Activated CD4-positive, alpha-beta T cell treated with anti-CD3 and anti-CD28 coated beads, Interleukin-2, amount 10 ng/mL, durations not matched to agents 24 days and 14 days (primary cell): ENCODE measurements at regions of chr12 and their contacts with region 1.

Region 1: GRCh38 chr12:10212201-10213131 is at the start of gene GABARAPL1:
- DNase-seq: peak; percentile 95
- H3K4me3 Mint-ChIP-seq: peak within 1 kb of the TSS; percentile 94
- H3K27ac Mint-ChIP-seq: peak within 1 kb of the TSS; percentile 93
- H3K4me1 Mint-ChIP-seq: peaks cover 26% of the 10 kb centered on the region
- H3K27me3 Mint-ChIP-seq: peaks cover 30% of the 10 kb centered on the region
- total RNA-seq, gene GABARAPL1: 1.5 and 2.6 TPM in 2 replicates

Region 2: DNA sequence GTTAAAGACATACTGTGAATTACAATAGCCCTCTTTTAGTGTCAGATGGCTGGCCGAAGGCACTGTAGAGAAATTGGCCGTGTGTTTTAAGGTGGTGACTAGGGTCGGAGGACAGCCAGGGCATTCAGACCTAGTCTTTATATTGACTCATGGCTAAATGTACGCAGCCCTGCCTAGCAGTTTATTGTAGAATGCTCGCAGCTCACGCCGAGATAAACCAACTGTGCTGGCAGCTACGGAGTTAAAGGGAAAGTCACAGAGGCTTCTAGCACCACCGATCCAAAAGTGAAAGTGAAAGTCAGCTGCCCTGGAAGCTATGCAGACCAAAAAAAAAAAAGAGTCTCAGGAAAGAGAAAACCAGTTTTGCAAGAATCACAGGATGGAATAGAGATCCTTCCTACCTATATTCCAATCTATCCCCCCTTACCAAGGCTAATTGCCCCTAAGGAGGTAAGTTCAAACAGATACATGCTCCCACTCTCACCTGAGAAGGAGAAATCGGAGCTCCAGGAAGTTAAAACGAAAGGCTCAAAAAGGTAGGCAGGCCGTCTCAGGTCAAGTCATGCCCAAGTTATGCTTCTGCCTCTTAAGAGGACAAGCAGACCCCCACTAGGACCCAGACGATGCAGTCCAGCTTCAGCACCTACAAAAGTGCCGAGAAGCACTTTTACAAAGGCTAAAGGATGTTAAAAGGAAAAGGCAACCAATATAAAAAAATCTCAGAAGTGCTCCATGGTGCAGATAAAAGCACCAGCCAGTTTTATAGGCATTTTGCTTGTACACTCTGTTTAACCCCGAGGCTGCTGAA is 152.6 kb after region 1 on chr12:
- intact Hi-C with region 1: loop called (anchors 10 kb)
- DNase-seq: peak; percentile 90
- H3K4me3 Mint-ChIP-seq: no peak overlapping the region
- H3K27ac Mint-ChIP-seq: no peak overlapping the region
- H3K4me1 Mint-ChIP-seq: no peaks in the 10 kb centered on the region
- H3K27me3 Mint-ChIP-seq: peaks cover 36% of the 10 kb centered on the region

Region 3: GRCh38 chr12:10613349-10614055 is 401.0 kb after region 1 on chr12 and contains the start of gene MAGOHB:
- intact Hi-C with region 1: loop called (anchors 2 kb)
- DNase-seq: peak; percentile 100
- H3K4me3 Mint-ChIP-seq: peak within 1 kb of the TSS; percentile 100
- H3K27ac Mint-ChIP-seq: peak within 1 kb of the TSS; percentile 100
- H3K4me1 Mint-ChIP-seq: peaks cover 27% of the 10 kb centered on the region
- H3K27me3 Mint-ChIP-seq: peaks cover 19% of the 10 kb centered on the region
- total RNA-seq, gene MAGOHB: 88.6 and 91.1 TPM in 2 replicates

Region 4: GRCh38 chr12:10721651-10722501 is 509.4 kb after region 1 on chr12:
- intact Hi-C with region 1: loop called (anchors 2 kb)
- DNase-seq: peak; percentile 89
- H3K4me3 Mint-ChIP-seq: peak overlapping the region; percentile 96
- H3K27ac Mint-ChIP-seq: peak overlapping the region; percentile 95
- H3K4me1 Mint-ChIP-seq: peaks cover 34% of the 10 kb centered on the region
- H3K27me3 Mint-ChIP-seq: peaks cover 31% of the 10 kb centered on the region

Region 5: DNA sequence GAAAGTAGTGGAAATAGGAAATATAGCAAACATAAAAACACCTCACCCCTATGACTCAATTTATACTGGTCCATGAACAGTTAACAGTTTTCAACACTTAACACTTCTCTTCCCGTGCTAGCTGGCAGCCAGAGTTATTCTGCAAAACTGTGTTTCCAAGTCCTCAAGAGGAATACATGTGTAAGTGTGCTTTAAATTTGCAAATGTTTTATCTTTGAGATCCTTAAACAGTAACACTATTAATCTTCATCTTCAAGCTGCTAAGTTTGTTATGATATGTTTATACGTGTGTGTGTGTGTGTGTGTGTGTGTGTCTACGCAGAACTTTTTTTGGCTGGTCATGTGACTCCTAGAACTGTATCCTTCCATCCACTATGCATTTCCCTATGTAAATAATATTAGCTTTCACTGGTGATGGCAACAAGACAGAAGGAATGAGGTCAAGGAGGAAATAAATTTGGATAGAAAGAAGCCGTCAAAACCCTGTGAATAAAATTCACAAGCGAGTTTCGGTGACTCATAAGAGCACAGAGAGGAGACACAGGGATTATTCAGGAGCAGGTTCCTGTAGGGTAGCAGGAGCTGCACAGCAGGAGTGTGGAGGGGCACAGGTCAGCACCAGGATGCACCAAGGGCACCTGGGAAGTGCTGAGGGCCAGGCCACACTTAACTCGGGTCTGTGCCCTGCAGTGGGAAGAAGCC is 1331.1 kb after region 1 on chr12:
- intact Hi-C with region 1: no loop called
- DNase-seq: no peak
- H3K4me3 Mint-ChIP-seq: no peak overlapping the region
- H3K27ac Mint-ChIP-seq: no peak overlapping the region
- H3K4me1 Mint-ChIP-seq: peaks cover 36% of the 10 kb centered on the region
- H3K27me3 Mint-ChIP-seq: no peaks in the 10 kb centered on the region